CD8-positive, alpha-beta T cell (primary cell): ENCODE measurements at regions of chr1 and their contacts with region 1.

Region 1: GRCh38 chr1:171313835-171314320 is at the start of gene FMO4:
- DNase-seq: peak; percentile 62 to 97 (median 79)
- ATAC-seq: peak; percentile 100
- H3K4me3 ChIP-seq: peak within 1 kb of the TSS; percentile 11 to 30
- H3K4me3 Mint-ChIP-seq: peak within 1 kb of the TSS; percentile 80
- H3K27ac ChIP-seq: peak within 1 kb of the TSS; percentile 41 to 48
- H3K27ac Mint-ChIP-seq: peak within 1 kb of the TSS; percentile 92
- H3K4me1 ChIP-seq: peaks cover 7% of the 10 kb centered on the region
- H3K4me1 Mint-ChIP-seq: peaks cover 21% of the 10 kb centered on the region
- H3K27me3 ChIP-seq: no peaks in the 10 kb centered on the region
- H3K27me3 Mint-ChIP-seq: no peaks in the 10 kb centered on the region
- CTCF ChIP-seq: peak; percentile 74
- total RNA-seq, gene FMO4: 0.87 to 1.0 TPM

Region 2: DNA sequence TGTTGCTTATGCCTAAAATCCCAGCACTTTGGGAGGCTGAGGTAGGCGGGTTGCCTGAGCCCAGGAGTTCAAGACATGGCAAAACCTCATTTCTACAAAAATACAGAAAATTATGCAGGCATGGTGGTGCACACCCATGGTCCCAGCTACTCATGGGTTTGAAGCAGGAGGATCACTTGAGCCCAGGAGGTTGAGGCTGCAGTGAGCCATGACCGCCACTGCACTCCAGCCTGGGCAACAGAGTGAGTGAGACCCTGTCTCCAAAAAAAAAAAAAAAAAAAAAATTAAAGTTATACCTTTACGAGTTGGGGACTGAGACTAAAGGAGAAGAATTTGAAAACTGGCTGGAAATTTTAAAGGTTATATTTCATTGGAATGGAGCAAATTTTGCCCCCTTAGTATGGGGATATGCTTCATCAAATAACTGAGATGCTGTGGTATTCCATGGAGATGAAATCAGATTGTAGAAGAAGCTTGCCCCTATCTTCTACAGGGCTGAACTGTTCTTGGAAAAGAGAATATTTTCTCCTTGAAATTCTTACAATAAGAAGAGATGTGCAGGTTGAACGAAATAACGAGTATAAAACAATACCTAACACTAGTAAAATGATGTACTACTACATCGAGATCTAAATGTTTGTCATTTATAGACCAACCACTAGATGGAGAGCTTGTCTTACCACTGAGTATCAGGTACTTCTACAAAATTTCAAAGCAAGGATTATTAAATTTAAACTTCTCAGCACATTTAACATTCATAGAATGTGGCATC is 1385.3 kb before region 1 on chr1:
- CTCF ChIA-PET with region 1: interaction called, 3 read pairs
- POLR2A ChIA-PET with region 1: no interaction called
- intact Hi-C with region 1: loop called (anchors 10 kb)
- DNase-seq: peak in 2 of 9 experiments; percentile 52 to 66
- ATAC-seq: peak; percentile 58
- H3K4me3 ChIP-seq: no peak overlapping the region
- H3K4me3 Mint-ChIP-seq: no peak overlapping the region
- H3K27ac ChIP-seq: no peak overlapping the region
- H3K27ac Mint-ChIP-seq: no peak overlapping the region
- H3K4me1 ChIP-seq: no peaks in the 10 kb centered on the region
- H3K4me1 Mint-ChIP-seq: peaks cover 6% of the 10 kb centered on the region
- H3K27me3 ChIP-seq: no peaks in the 10 kb centered on the region
- H3K27me3 Mint-ChIP-seq: no peaks in the 10 kb centered on the region
- CTCF ChIP-seq: peak; percentile 93

Region 3: GRCh38 chr1:170074250-170075157 is 1239.4 kb before region 1 on chr1 and contains the start of gene KIFAP3:
- CTCF ChIA-PET with region 1: no interaction called
- POLR2A ChIA-PET with region 1: no interaction called
- intact Hi-C with region 1: loop called (anchors 2 to 10 kb)
- DNase-seq: peak; percentile 89 to 99 (median 95)
- ATAC-seq: peak; percentile 96
- H3K4me3 ChIP-seq: peak within 1 kb of the TSS; percentile 74 to 92
- H3K4me3 Mint-ChIP-seq: peak within 1 kb of the TSS; percentile 89
- H3K27ac ChIP-seq: peak within 1 kb of the TSS; percentile 80 to 88
- H3K27ac Mint-ChIP-seq: peak within 1 kb of the TSS; percentile 94
- H3K4me1 ChIP-seq: peaks cover 28% of the 10 kb centered on the region
- H3K4me1 Mint-ChIP-seq: peaks cover 53% of the 10 kb centered on the region
- H3K27me3 ChIP-seq: no peaks in the 10 kb centered on the region
- H3K27me3 Mint-ChIP-seq: no peaks in the 10 kb centered on the region
- CTCF ChIP-seq: peak; percentile 46
- total RNA-seq, gene KIFAP3: 15.3 to 16.5 TPM

Region 4: GRCh38 chr1:170687621-170688020 is 626.3 kb before region 1 on chr1:
- CTCF ChIA-PET with region 1: interaction called, 22 read pairs
- POLR2A ChIA-PET with region 1: no interaction called
- intact Hi-C with region 1: no loop called
- DNase-seq: no peak
- ATAC-seq: no peak
- H3K4me3 ChIP-seq: no peak overlapping the region
- H3K4me3 Mint-ChIP-seq: no peak overlapping the region
- H3K27ac ChIP-seq: no peak overlapping the region
- H3K27ac Mint-ChIP-seq: no peak overlapping the region
- H3K4me1 ChIP-seq: no peaks in the 10 kb centered on the region
- H3K4me1 Mint-ChIP-seq: peaks cover 3% of the 10 kb centered on the region
- H3K27me3 ChIP-seq: peaks cover 0 to 6% of the 10 kb centered on the region in 2 experiments
- H3K27me3 Mint-ChIP-seq: peaks cover 24% of the 10 kb centered on the region
- CTCF ChIP-seq: no peak

Region 5: DNA sequence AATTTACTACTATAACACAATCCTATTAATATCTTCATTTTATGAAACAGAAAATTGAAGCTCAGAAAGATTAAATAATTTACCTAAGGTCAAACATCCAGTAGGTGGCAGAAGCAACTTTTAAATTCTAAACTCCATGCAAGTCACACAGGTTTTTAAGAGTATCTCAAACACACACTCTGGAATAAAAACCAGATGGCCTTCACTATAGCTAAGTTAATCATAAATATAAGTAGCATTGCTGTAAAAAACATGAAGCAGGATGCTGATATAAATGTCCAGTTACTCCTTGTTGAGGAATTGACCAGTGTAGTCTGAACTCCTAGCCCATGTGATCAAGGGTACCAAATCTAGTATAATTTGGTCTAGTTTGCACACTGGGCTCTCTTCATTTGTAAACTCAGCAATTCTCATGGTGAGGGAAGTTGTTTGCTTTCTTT is 232.5 kb before region 1 on chr1:
- CTCF ChIA-PET with region 1: interaction called, 4 read pairs
- POLR2A ChIA-PET with region 1: no interaction called
- intact Hi-C with region 1: loop called in 1 of 2 experiments (anchors 5 kb)
- DNase-seq: no peak
- ATAC-seq: no peak
- H3K4me3 ChIP-seq: no peak overlapping the region
- H3K4me3 Mint-ChIP-seq: no peak overlapping the region
- H3K27ac ChIP-seq: no peak overlapping the region
- H3K27ac Mint-ChIP-seq: no peak overlapping the region
- H3K4me1 ChIP-seq: no peaks in the 10 kb centered on the region
- H3K4me1 Mint-ChIP-seq: no peaks in the 10 kb centered on the region
- H3K27me3 ChIP-seq: no peaks in the 10 kb centered on the region
- H3K27me3 Mint-ChIP-seq: peaks cover 3% of the 10 kb centered on the region
- CTCF ChIP-seq: no peak

Region 6: DNA sequence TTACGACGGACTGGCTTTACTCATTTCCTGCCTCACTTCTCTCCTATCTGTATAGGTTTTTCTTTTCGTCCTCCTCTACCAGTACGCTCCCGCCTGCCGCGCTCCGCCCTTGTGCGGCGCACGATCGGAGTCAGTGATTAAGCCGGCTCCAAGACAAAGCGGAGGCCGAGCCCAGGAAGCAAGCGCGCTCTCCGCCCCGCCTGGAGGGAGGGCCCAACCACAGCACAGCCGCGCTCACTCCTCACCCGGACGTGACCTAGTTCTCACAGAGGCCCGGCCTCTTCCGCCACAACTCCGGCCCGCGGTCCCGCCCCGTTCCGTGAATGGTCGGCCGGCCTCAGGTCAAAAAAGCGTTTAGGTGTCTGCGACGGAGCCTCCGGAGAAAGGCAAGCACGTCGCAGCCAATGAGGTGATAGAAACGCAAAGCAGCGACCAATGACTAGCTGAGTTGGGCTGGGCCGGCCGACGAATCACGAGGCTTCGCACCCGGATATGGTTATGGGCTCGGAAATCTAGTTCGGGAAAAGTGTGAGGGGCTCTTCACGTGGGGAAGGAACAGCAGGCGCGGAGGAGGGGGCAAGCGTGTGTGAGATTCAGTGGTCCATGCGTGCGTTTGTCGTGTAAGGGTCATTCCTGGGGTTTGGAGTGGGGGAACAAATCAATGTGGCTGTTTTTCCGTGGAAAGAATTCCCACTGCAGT is 467.4 kb after region 1 on chr1 and contains the start of gene METTL13:
- CTCF ChIA-PET with region 1: no interaction called
- POLR2A ChIA-PET with region 1: no interaction called
- intact Hi-C with region 1: loop called (anchors 5 to 10 kb)
- DNase-seq: peak; percentile 96 to 99 (median 98)
- ATAC-seq: peak; percentile 90
- H3K4me3 ChIP-seq: peak within 1 kb of the TSS; percentile 89 to 92
- H3K4me3 Mint-ChIP-seq: peak within 1 kb of the TSS; percentile 95
- H3K27ac ChIP-seq: peak within 1 kb of the TSS; percentile 75 to 89
- H3K27ac Mint-ChIP-seq: peak within 1 kb of the TSS; percentile 96
- H3K4me1 ChIP-seq: peaks cover 33% of the 10 kb centered on the region
- H3K4me1 Mint-ChIP-seq: peaks cover 54% of the 10 kb centered on the region
- H3K27me3 ChIP-seq: no peaks in the 10 kb centered on the region
- H3K27me3 Mint-ChIP-seq: no peaks in the 10 kb centered on the region
- CTCF ChIP-seq: no peak
- total RNA-seq, gene METTL13: 6.6 to 6.9 TPM